Right ventricle myocardium inferior (tissue), 1 donor: ENCODE measurements at regions of chr2 and their contacts with region 1.

Region 1: DNA sequence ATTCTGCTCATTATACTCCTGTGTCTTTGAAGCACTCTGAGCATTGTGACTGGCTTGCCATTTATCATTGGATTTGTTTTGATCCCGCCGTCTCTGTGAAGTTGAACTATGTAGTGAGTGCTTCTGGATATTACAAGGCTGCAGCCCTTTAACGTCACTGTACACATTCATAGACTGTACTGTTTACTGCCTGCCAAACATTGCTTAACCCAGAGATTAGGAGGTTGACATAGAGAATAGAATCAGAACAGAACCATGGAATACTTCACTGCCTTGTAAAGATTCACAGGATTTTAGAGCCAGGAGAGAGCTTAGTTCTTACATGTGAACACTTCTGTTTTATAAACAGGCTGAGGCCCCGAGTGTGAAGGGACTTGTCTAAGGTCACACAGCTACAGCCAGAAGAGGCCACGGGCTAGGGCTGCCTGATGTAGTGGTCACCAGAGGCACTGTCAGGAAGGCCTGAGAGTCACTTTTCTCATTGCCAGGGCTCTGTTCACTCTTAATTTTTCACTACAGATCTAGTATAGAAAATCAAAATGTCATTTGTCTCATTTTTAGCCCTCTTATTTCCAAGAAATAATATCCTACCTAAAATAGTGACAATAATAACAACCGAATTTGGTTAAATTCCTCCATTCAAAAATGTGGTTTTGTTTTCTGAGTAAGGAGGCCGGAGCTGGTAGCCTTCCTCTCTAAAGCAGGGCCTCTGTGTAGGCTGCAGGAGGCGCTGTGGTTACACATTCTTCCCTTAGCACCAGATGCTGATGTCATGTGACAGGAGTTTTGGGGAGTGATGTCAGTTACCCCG is 87.9 kb downstream of the UGGT1 start:
- DNase-seq: no peak
- ATAC-seq: peak; percentile 95

Region 2: DNA sequence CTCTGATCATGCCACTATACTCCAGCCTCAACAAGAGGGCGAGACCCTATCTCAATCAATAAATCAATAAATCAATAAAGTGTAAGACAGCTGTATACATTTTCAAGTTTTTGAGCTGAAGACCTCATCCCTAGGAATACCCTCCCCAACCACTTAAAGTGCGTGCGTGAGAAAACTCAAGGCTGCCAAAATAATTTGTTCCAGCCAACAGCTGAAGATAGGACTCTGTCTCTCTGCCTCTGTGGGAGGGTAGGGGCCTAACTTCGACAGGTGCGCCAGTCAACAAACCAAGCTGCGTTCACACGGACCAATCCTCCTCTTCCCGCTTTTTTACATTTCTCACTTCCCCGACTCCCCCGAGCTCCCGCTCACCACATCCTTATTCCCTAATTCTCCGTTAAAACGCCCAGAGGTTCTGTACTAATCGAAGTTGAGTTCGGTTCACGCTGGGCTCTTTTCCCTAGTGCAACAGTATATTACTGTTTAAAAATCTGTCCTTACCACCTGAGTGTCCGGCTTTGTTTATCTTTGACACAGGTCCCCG is 321.5 kb before region 1 on chr2:
- intact Hi-C with region 1: no loop called
- DNase-seq: no peak
- ATAC-seq: no peak

Region 3: GRCh38 chr2:128305159-128306087 is 126.6 kb after region 1 on chr2:
- intact Hi-C with region 1: loop called (anchors 5 kb)
- DNase-seq: peak; percentile 84
- ATAC-seq: peak; percentile 71